ENCODE measurements at regions of chr18 and their contacts with region 1.

Region 1: GRCh38 chr18:45690975-45691815 is 32.8 kb upstream of the SLC14A1 start:
- DNase-seq: peak; percentile 87 to 92
- ATAC-seq: peak; percentile 89
- H3K4me3 ChIP-seq: no peak overlapping the region
- H3K27ac ChIP-seq: no peak overlapping the region
- H3K4me1 ChIP-seq: no peaks in the 10 kb centered on the region
- H3K27me3 ChIP-seq: no peaks in the 10 kb centered on the region

Region 2: GRCh38 chr18:45621061-45621511 is 70.1 kb before region 1 on chr18:
- intact Hi-C with region 1: loop called in 1 of 2 experiments (anchors 2 kb)
- DNase-seq: no peak
- ATAC-seq: no peak
- H3K4me3 ChIP-seq: no peak overlapping the region
- H3K27ac ChIP-seq: no peak overlapping the region
- H3K4me1 ChIP-seq: peaks cover 5 to 7% of the 10 kb centered on the region in 2 donors
- H3K27me3 ChIP-seq: no peaks in the 10 kb centered on the region

Region 3: GRCh38 chr18:45839414-45840395 is 148.5 kb after region 1 on chr18:
- intact Hi-C with region 1: loop called in 1 of 2 experiments (anchors 2 kb)
- DNase-seq: no peak
- ATAC-seq: no peak
- H3K4me3 ChIP-seq: no peak overlapping the region
- H3K27ac ChIP-seq: no peak overlapping the region
- H3K4me1 ChIP-seq: no peaks in the 10 kb centered on the region
- H3K27me3 ChIP-seq: no peaks in the 10 kb centered on the region

Region 4: GRCh38 chr18:45879681-45880655 is 188.8 kb after region 1 on chr18:
- intact Hi-C with region 1: loop called (anchors 1 to 5 kb)
- DNase-seq: peak; percentile 84 to 88
- ATAC-seq: peak; percentile 92
- H3K4me3 ChIP-seq: no peak overlapping the region
- H3K27ac ChIP-seq: no peak overlapping the region
- H3K4me1 ChIP-seq: no peaks in the 10 kb centered on the region
- H3K27me3 ChIP-seq: no peaks in the 10 kb centered on the region